Gastrocnemius medialis (tissue), 4 donors: ENCODE measurements at regions of chr5 and their contacts with region 1.

Region 1: DNA sequence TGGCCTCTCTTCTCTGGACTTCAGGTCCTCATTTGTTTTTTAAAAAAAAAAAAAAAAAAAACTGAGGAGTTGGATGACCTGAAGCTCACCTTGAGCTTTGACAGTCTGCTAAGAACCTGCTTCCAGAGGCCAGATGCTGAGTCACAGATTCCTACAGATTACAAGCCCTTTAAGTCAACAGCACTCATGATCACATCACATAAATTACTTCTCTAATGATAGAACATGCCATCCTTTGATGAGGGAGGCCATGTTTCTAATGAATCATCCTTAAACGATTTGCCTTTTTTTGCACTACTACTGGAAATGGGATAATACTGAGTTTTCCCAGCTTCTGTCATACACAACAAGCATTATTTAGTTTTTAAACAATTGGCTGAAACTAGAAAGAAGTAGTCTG is 34.2 kb upstream of the MYOT start:
- DNase-seq: peak; percentile 52 to 63
- ATAC-seq: peak; percentile 54 to 72
- H3K4me3 ChIP-seq: no peak overlapping the region
- H3K27ac ChIP-seq: peak overlapping the region; percentile 92 to 94 (median 93)
- H3K4me1 ChIP-seq: peaks cover 68 to 86% of the 10 kb centered on the region in 2 donors
- H3K27me3 ChIP-seq: no peaks in the 10 kb centered on the region
- CTCF ChIP-seq: no peak
- POLR2A ChIP-seq: no peak

Region 2: GRCh38 chr5:137470111-137470920 is 363.1 kb before region 1 on chr5:
- in situ Hi-C with region 1: no loop called
- intact Hi-C with region 1: loop called (anchors 10 kb)
- DNase-seq: peak; percentile 45 to 77
- ATAC-seq: peak; percentile 71 to 86
- H3K4me3 ChIP-seq: no peak overlapping the region
- H3K27ac ChIP-seq: peak overlapping the region in 2 of 4 donors; percentile 57 to 73
- H3K4me1 ChIP-seq: peaks cover 0 to 11% of the 10 kb centered on the region in 2 donors
- H3K27me3 ChIP-seq: no peaks in the 10 kb centered on the region
- CTCF ChIP-seq: no peak
- POLR2A ChIP-seq: no peak

Region 3: DNA sequence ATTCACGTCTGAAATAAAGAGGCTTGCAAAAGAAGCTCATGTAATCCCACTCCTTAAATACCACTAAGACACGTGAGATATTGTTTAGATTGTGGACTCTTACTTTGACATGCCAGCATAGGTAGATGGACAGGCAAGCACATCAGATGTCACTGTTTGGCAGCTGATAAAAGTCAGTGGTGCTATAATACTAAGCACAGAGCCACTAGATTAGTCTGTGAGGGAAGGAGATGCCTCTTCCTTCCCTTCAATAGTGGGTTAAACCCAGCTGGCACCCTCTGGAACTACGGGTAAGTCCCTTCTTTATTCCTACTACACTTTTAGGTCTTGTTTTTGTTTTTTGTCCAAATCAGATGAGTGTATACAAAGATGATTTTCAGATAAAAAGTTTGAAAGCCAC is 34.2 kb after region 1 on chr5 and contains the start of gene MYOT:
- in situ Hi-C with region 1: no loop called
- intact Hi-C with region 1: loop called (anchors 1 kb)
- DNase-seq: peak; percentile 70 to 78
- ATAC-seq: peak; percentile 72 to 75
- H3K4me3 ChIP-seq: peak within 1 kb of the TSS; percentile 48 to 68 (median 54)
- H3K27ac ChIP-seq: peak within 1 kb of the TSS; percentile 87 to 97 (median 90)
- H3K4me1 ChIP-seq: peaks cover 21 to 28% of the 10 kb centered on the region in 2 donors
- H3K27me3 ChIP-seq: no peaks in the 10 kb centered on the region
- CTCF ChIP-seq: peak in 1 of 5 experiments; percentile 45
- POLR2A ChIP-seq: peak; percentile 96 to 99
- total RNA-seq, gene MYOT: 99.0 to 801 (median 294) TPM

Region 4: DNA sequence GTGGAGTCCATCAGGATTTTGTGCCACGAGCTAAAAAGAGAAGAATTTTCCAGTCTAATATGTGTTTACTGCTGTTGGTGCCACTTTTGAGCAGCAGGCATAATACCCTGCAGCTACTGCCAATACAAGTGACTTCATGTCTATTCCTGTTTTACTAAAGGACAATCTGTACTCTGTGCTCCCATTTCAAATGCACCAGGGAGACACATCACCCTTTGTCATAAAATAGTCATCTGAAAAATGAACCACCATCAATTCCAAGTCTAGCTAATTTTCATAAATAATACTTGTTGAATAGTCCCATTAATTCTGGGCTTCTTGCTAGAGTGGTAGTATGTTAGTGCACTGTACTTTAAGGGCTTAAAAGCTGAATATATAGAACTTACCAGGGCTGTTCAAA is 46.9 kb after region 1 on chr5:
- in situ Hi-C with region 1: loop called in 2 of 4 experiments (anchors 5 to 10 kb)
- intact Hi-C with region 1: loop called (anchors 2 kb)
- DNase-seq: peak; percentile 57 to 59
- ATAC-seq: peak; percentile 94 to 96
- H3K4me3 ChIP-seq: peak overlapping the region in 2 of 4 donors; percentile 4 to 25
- H3K27ac ChIP-seq: peak overlapping the region; percentile 87 to 97 (median 90)
- H3K4me1 ChIP-seq: peaks cover 51 to 84% of the 10 kb centered on the region in 2 donors
- H3K27me3 ChIP-seq: no peaks in the 10 kb centered on the region
- CTCF ChIP-seq: no peak
- POLR2A ChIP-seq: peak; percentile 13 to 72

Region 5: DNA sequence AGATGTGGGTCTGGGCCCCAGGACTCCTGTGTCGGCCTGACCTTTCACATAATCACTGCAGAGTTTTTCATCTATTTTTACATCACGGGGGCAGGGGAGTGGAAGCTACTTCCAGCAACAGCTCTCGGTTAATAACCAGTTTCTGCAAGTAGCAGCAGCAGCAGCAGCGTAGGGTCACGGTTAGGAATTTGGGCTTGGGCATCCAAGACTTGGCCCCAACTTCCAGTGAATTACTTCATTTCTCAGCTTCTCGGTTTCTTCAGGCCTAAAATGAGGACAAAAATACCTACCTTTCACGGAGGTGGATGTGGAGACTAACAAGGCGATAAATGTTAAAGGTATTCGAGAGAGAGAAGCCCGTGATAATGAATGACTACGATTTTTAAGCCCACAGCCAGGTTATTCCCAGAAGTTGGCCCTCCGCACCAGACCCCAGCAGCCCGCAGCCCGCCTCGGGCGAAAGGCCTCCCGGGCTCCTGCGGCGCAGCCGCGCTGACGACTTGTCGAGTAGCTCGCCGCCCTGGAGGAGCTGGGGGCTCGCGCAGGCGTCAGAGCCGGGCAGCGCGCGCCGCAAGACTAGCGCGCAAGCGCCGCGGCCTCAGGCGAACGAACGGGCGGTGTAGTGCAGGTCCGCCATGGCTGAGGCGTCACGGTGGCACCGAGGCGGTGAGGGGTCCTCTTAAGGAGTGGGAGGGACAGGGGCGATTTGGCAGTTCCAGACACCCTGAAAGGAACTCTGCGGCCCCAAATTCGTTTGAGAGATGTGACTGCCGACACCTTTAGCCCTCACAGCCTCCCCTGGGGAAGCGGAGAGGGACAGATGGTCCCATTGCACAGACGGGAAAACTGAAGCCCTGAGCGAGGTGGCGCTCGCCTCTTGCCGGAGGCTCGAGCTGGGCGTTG is 55.6 kb after region 1 on chr5 and contains the start of gene PKD2L2:
- in situ Hi-C with region 1: loop called in 1 of 4 experiments (anchors 10 kb)
- intact Hi-C with region 1: no loop called
- DNase-seq: peak; percentile 50 to 82
- ATAC-seq: peak; percentile 42 to 66
- H3K4me3 ChIP-seq: peak within 1 kb of the TSS; percentile 43 to 51 (median 46)
- H3K27ac ChIP-seq: peak within 1 kb of the TSS; percentile 88 to 97 (median 92)
- H3K4me1 ChIP-seq: peaks cover 10 to 40% of the 10 kb centered on the region in 2 donors
- H3K27me3 ChIP-seq: no peaks in the 10 kb centered on the region
- CTCF ChIP-seq: no peak
- POLR2A ChIP-seq: peak; percentile 41 to 50
- total RNA-seq, gene PKD2L2: 0.70 to 4.8 (median 0.94) TPM in 3 of 4 donors, not detected in the other

Region 6: GRCh38 chr5:138035605-138036537 is 202.4 kb after region 1 on chr5:
- in situ Hi-C with region 1: no loop called
- intact Hi-C with region 1: no loop called
- DNase-seq: peak; percentile 23 to 64
- ATAC-seq: peak; percentile 63 to 78
- H3K4me3 ChIP-seq: no peak overlapping the region
- H3K27ac ChIP-seq: peak overlapping the region in 2 of 4 donors; percentile 36 to 58
- H3K4me1 ChIP-seq: peaks cover 20 to 25% of the 10 kb centered on the region in 2 donors
- H3K27me3 ChIP-seq: no peaks in the 10 kb centered on the region
- CTCF ChIP-seq: peak; percentile 71 to 86 (median 79)
- POLR2A ChIP-seq: no peak